ENCODE measurements at regions of chr7 and their contacts with region 1.

Region 1: DNA sequence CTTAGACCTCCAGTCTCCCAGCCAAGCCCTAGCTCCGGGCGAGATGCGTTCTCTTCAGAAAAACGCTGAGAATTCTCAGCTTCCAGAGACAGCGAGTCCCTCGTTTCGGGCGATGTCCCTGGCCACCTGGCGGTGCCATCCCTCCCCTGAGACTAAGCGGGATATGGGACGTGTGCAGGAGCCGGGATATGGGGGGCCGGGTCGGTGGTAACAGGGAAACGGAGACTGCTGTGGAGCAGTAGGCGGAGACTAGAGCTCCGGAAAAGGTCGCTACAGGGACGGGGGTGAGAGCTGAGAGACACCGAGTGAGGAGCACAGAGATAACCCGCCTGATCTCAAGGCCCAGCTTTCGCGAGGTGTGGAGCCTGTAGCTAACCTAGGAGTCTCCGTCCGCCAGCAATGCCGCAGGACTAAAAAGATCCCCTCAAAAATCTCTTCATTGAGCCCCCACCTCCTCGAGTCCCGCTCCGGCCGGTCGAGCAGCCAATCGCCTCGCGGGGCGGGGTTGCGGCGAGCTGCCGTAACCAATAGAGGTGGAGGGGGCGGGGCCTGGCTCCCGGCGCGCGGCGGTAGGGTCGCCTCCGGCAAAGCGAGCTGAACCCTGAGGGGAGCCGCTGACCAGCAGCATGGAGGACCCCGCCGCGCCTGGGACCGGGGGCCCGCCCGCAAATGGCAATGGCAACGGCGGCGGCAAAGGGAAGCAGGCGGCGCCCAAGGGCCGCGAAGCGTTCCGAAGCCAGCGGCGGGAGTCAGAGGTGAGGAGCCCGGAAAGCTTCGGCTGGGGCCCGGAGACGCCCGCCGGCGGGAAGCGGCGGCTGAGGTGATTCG is at the start of gene STRIP2:
- DNase-seq: peak; percentile 94
- H3K4me3 Mint-ChIP-seq: peak within 1 kb of the TSS; percentile 89
- H3K27ac Mint-ChIP-seq: peak within 1 kb of the TSS; percentile 92
- H3K4me1 Mint-ChIP-seq: peaks cover 28% of the 10 kb centered on the region
- H3K27me3 Mint-ChIP-seq: peaks cover 7% of the 10 kb centered on the region
- total RNA-seq, gene STRIP2: 71.4 to 76.0 TPM

Region 2: DNA sequence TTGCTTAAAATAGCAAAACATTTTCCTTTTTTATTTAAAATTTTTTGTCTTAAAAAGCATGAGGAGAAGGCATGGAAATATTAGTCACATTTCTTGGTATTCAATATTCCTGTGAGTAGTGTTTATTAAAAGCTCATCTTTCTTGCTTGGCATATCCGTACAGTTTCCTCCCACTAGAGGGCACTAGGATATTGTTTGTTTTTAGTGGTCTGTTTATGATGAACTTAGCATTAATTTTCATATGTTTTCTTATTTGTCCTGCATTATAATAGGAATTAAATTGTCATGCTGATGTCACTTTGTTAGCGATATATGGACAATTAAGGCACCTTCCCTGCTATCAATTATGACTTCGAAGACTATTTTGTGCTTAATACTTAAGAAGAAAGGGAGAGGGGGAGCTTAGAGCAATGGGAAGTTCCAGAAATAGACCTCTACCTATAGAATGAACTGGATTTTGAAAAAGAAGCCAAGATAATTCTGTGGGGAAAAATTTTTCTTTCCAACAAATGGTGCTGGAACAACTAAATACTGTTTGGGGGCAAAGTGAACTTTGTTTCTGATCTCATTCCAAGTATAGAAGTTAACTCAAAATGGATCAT is 90.9 kb before region 1 on chr7:
- CTCF ChIA-PET with region 1: interaction called, 10 read pairs
- intact Hi-C with region 1: loop called (anchors 1 kb)
- DNase-seq: peak; percentile 39
- H3K4me3 Mint-ChIP-seq: no peak overlapping the region
- H3K27ac Mint-ChIP-seq: no peak overlapping the region
- H3K4me1 Mint-ChIP-seq: peaks cover 32% of the 10 kb centered on the region
- H3K27me3 Mint-ChIP-seq: no peaks in the 10 kb centered on the region

Region 3: GRCh38 chr7:129389829-129390228 is 44.2 kb before region 1 on chr7:
- CTCF ChIA-PET with region 1: interaction called, 3 read pairs
- intact Hi-C with region 1: loop called (anchors 1 kb)
- DNase-seq: no peak
- H3K4me3 Mint-ChIP-seq: no peak overlapping the region
- H3K27ac Mint-ChIP-seq: no peak overlapping the region
- H3K4me1 Mint-ChIP-seq: peaks cover 6% of the 10 kb centered on the region
- H3K27me3 Mint-ChIP-seq: no peaks in the 10 kb centered on the region

Region 4: DNA sequence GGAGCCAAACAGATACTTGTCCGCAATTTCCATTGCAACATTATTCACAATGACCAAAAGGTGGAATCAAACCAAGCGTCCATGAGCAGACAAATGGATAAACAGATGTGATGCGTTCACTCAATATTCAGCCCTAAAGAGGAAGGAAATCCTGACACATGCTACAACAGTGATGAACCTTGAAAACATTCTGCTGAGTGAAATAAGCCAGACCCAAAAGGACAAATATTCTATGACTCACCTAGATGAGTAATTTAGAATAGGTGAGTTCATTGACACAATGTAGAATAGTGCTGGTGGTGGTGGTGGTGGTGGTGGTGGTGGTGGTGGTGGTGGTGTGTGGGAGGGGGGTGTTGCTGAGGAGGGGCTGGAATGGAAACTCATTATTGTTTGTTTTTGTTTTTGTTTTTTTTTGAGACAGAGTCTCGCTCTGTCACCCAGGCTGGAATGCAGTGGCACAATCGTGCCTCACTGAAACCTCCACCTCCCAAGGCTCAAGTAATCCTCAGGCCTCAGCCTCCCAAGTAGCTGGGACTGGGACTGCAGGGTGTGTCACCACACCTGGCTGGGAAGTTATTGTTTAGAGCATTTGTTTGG is 96.8 kb after region 1 on chr7:
- CTCF ChIA-PET with region 1: no interaction called
- intact Hi-C with region 1: loop called (anchors 1 kb)
- DNase-seq: peak; percentile 71
- H3K4me3 Mint-ChIP-seq: no peak overlapping the region
- H3K27ac Mint-ChIP-seq: no peak overlapping the region
- H3K4me1 Mint-ChIP-seq: peaks cover 11% of the 10 kb centered on the region
- H3K27me3 Mint-ChIP-seq: peaks cover 3% of the 10 kb centered on the region

Region 5: GRCh38 chr7:130182990-130183389 is 748.9 kb after region 1 on chr7:
- CTCF ChIA-PET with region 1: no interaction called
- intact Hi-C with region 1: loop called (anchors 1 kb)
- DNase-seq: no peak
- H3K4me3 Mint-ChIP-seq: no peak overlapping the region
- H3K27ac Mint-ChIP-seq: peak overlapping the region; percentile 65
- H3K4me1 Mint-ChIP-seq: peaks cover 30% of the 10 kb centered on the region
- H3K27me3 Mint-ChIP-seq: no peaks in the 10 kb centered on the region